Activated CD4-positive, alpha-beta memory T cell treated with anti-CD3 and anti-CD28 coated beads for 36 hours (primary cell): ENCODE measurements at regions of chr16 and their contacts with region 1.

Region 1: DNA sequence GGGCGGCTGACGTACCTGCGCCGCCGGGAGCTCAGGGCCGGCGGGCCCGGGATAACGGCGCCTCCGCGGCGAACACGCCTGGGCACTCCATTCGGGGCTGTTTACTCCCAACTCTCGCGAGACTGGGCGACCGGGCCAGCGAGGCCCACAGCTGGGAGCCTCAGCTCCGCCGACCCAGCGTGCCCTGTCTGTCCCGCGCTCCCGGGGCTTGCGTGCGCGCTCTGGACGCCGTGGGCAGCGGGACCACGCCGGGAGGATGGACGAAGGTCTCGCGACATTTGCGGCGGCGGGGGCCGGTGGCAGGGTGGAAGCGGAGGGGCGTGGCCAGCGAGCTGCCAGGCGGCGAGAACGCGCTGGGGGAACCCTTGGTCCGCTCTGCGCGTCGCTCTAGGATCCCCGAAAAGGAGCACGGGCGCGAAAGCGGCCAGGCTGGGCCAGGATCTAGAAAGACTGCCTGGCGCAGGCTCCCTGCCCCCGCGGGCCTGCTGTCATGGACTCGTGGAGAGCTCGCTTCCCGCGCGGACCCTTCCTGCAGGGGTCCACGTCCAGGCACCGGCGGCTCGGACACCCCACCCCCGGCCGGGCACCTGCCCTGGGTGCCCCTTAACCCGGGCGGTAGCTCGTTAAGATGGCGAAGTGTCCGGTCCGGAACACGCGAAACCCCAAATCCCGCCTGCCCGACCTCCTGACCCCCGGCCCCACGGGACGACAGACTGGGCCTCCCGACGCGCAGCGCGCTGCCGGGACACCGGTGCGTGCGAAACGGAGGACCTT is at the start of gene MBTPS1:
- DNase-seq: peak; percentile 99
- H3K4me3 Mint-ChIP-seq: peak within 1 kb of the TSS; percentile 91
- H3K27ac Mint-ChIP-seq: peak within 1 kb of the TSS; percentile 92
- H3K4me1 Mint-ChIP-seq: peaks cover 25% of the 10 kb centered on the region
- H3K27me3 Mint-ChIP-seq: no peaks in the 10 kb centered on the region
- total RNA-seq, gene MBTPS1: 37.5 to 37.6 TPM

Region 2: GRCh38 chr16:83807710-83808572 is 309.0 kb before region 1 on chr16 and contains the start of gene HSBP1:
- CTCF ChIA-PET with region 1: no interaction called
- POLR2A ChIA-PET with region 1: no interaction called
- intact Hi-C with region 1: loop called (anchors 1 kb)
- DNase-seq: peak; percentile 96
- H3K4me3 Mint-ChIP-seq: peak within 1 kb of the TSS; percentile 98
- H3K27ac Mint-ChIP-seq: peak within 1 kb of the TSS; percentile 88
- H3K4me1 Mint-ChIP-seq: peaks cover 33% of the 10 kb centered on the region
- H3K27me3 Mint-ChIP-seq: no peaks in the 10 kb centered on the region
- total RNA-seq, gene HSBP1: 70.1 to 74.7 TPM

Region 3: DNA sequence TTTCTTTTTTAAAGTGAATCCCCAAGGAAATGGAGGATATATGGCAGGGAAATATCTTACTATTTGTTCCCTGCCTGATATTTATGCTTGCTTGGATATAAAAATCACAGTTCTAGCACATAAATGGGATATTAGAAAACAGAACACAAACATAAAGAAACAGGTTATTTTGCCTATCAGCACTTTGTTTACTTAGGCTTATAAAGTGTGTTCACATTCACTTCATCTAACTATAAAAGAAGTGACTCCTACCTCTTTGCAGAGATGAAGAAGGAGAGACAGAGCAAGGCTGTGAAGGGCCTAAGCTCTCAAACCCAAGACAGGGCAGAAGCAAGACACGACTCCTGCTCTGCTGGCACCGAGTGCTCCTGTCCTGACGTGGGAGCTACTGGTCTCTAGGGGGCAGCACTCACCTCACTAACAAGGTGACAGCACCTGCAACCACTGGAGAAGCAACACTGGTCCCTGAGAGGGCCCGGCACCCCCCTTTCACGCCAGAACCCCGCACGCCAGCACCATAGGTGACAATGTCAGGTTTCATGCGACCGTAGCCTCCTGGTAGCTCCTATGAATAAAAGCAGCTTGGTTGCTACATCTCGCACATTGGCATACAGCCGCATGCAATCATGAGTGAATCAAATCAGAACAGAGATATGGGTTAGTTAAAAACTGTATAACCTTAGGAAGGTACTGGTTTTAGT is 32.2 kb before region 1 on chr16:
- CTCF ChIA-PET with region 1: interaction called, 18 read pairs
- POLR2A ChIA-PET with region 1: interaction called, 5 read pairs
- intact Hi-C with region 1: no loop called
- DNase-seq: peak; percentile 79
- H3K4me3 Mint-ChIP-seq: no peak overlapping the region
- H3K27ac Mint-ChIP-seq: no peak overlapping the region
- H3K4me1 Mint-ChIP-seq: peaks cover 39% of the 10 kb centered on the region
- H3K27me3 Mint-ChIP-seq: no peaks in the 10 kb centered on the region

Region 4: GRCh38 chr16:84103678-84104077 is 13.2 kb before region 1 on chr16:
- CTCF ChIA-PET with region 1: interaction called, 10 read pairs
- POLR2A ChIA-PET with region 1: interaction called, 8 read pairs
- intact Hi-C with region 1: loop called (anchors 2 kb)
- DNase-seq: no peak
- H3K4me3 Mint-ChIP-seq: no peak overlapping the region
- H3K27ac Mint-ChIP-seq: no peak overlapping the region
- H3K4me1 Mint-ChIP-seq: peaks cover 43% of the 10 kb centered on the region
- H3K27me3 Mint-ChIP-seq: no peaks in the 10 kb centered on the region

Region 5: GRCh38 chr16:84159007-84159406 is 42.1 kb after region 1 on chr16:
- CTCF ChIA-PET with region 1: no interaction called
- POLR2A ChIA-PET with region 1: no interaction called
- intact Hi-C with region 1: no loop called
- DNase-seq: no peak
- H3K4me3 Mint-ChIP-seq: no peak overlapping the region
- H3K27ac Mint-ChIP-seq: no peak overlapping the region
- H3K4me1 Mint-ChIP-seq: no peaks in the 10 kb centered on the region
- H3K27me3 Mint-ChIP-seq: peaks cover 33% of the 10 kb centered on the region

Region 6: DNA sequence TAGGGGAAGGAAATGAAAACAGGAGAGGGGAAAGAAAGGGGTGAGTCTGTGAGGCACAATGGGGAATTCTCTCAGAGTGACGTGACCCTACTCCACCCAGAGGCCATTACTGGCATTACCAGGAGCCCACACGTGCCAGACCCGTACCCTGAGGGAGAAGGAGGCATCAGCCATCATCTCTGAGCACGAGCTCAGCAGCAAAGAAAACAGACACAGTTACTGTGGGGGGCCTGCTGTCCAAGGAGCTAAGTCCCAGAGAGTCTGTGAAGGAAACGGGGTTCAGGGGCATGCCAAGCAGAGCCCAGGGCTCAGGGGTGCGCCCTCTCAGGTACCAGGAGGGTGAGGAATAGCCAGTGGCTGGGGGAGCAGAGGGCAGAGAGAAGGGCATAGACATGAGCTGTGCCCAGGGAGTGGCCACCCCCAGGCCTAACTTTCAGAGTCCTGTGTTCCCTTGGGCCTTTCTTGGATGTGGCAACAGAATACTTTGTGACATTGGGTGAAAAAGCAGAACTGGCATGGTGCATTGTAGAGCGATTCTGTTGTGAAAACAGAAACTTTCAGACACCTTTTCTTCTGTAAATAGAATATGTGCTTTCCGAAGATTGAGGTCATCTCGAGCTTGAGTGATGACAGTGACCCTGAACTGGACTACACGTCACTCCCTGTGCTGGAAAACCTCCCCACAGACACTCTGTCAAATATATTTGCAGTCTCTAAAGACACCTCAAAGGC is 58.6 kb after region 1 on chr16:
- CTCF ChIA-PET with region 1: interaction called, 27 read pairs
- POLR2A ChIA-PET with region 1: interaction called, 5 read pairs
- intact Hi-C with region 1: loop called (anchors 5 kb)
- DNase-seq: peak; percentile 79
- H3K4me3 Mint-ChIP-seq: no peak overlapping the region
- H3K27ac Mint-ChIP-seq: no peak overlapping the region
- H3K4me1 Mint-ChIP-seq: peaks cover 25% of the 10 kb centered on the region
- H3K27me3 Mint-ChIP-seq: peaks cover 6% of the 10 kb centered on the region

Region 7: GRCh38 chr16:84209989-84210388 is 93.1 kb after region 1 on chr16:
- CTCF ChIA-PET with region 1: no interaction called
- POLR2A ChIA-PET with region 1: no interaction called
- intact Hi-C with region 1: no loop called
- DNase-seq: no peak
- H3K4me3 Mint-ChIP-seq: no peak overlapping the region
- H3K27ac Mint-ChIP-seq: no peak overlapping the region
- H3K4me1 Mint-ChIP-seq: peaks cover 2% of the 10 kb centered on the region
- H3K27me3 Mint-ChIP-seq: no peaks in the 10 kb centered on the region

Region 8: GRCh38 chr16:84599521-84600202 is 482.8 kb after region 1 on chr16:
- CTCF ChIA-PET with region 1: no interaction called
- POLR2A ChIA-PET with region 1: no interaction called
- intact Hi-C with region 1: loop called (anchors 5 kb)
- DNase-seq: peak; percentile 90
- H3K4me3 Mint-ChIP-seq: peak overlapping the region; percentile 72
- H3K27ac Mint-ChIP-seq: peak overlapping the region; percentile 96
- H3K4me1 Mint-ChIP-seq: peaks cover 88% of the 10 kb centered on the region
- H3K27me3 Mint-ChIP-seq: no peaks in the 10 kb centered on the region